H1 (cell line): ENCODE measurements at regions of chr18 and their contacts with region 1.

Region 1: DNA sequence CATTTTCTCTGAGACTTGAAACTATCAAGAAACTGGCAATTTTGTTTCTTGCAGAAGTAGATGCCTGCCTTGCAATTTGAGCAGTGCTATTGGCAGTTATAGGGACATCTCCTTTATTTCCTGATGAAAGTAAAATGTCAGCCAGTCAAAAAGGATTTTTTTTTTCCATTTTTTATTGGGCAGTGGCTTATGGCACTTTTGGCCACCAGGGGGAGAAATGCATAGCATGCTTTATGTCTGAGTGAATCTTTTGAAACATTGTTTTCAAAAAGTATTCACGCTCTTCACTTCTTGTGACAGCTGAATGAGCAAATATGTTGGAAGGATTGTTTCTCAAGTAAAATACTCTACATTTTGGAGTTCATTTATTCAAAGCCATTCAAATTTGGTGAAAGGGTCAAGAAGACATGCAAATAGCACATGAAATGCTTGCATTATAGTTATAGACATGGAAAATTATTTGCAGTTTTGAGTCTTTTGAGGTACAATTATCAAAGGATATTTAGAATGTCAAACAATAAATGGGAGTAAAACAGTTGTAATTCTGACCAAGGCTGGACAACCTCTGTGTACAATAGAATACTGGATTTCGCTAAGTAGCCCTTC is 491.0 kb downstream of the CDH2 start:
- DNase-seq: no peak
- H3K4me3 ChIP-seq: no peak overlapping the region
- H3K27ac ChIP-seq: no peak overlapping the region
- H3K4me1 ChIP-seq: no peaks in the 10 kb centered on the region
- H3K27me3 ChIP-seq: no peaks in the 10 kb centered on the region
- CTCF ChIP-seq: peak in 2 of 3 experiments; percentile 48 to 63; a peak in 3 of 4 replicates
- EP300 ChIP-seq: no peak
- POLR2A ChIP-seq: no peak
- RAD21 ChIP-seq: peak; percentile 53 to 62

Region 2: GRCh38 chr18:27567434-27567833 is 118.5 kb before region 1 on chr18:
- CTCF ChIA-PET with region 1: no interaction called
- POLR2A ChIA-PET with region 1: no interaction called
- DNase-seq: no peak
- H3K4me3 ChIP-seq: no peak overlapping the region
- H3K27ac ChIP-seq: no peak overlapping the region
- H3K4me1 ChIP-seq: peaks cover 0 to 3% (median 3%) of the 10 kb centered on the region in 4 experiments; a peak in 4 of 7 replicates
- H3K27me3 ChIP-seq: no peaks in the 10 kb centered on the region; a peak in 1 of 7 replicates
- CTCF ChIP-seq: no peak
- EP300 ChIP-seq: no peak
- POLR2A ChIP-seq: no peak
- RAD21 ChIP-seq: no peak

Region 3: GRCh38 chr18:27645929-27646328 is 40.0 kb before region 1 on chr18:
- CTCF ChIA-PET with region 1: no interaction called
- POLR2A ChIA-PET with region 1: no interaction called
- DNase-seq: no peak
- H3K4me3 ChIP-seq: no peak overlapping the region
- H3K27ac ChIP-seq: no peak overlapping the region
- H3K4me1 ChIP-seq: peaks cover 0 to 4% (median 2%) of the 10 kb centered on the region in 4 experiments; a peak in 3 of 7 replicates
- H3K27me3 ChIP-seq: no peaks in the 10 kb centered on the region
- CTCF ChIP-seq: no peak
- EP300 ChIP-seq: no peak
- POLR2A ChIP-seq: no peak
- RAD21 ChIP-seq: no peak

Region 4: GRCh38 chr18:27674411-27674810 is 11.5 kb before region 1 on chr18:
- CTCF ChIA-PET with region 1: interaction called, 21 read pairs
- POLR2A ChIA-PET with region 1: no interaction called
- DNase-seq: no peak
- H3K4me3 ChIP-seq: no peak overlapping the region
- H3K27ac ChIP-seq: no peak overlapping the region
- H3K4me1 ChIP-seq: no peaks in the 10 kb centered on the region
- H3K27me3 ChIP-seq: no peaks in the 10 kb centered on the region
- CTCF ChIP-seq: no peak
- EP300 ChIP-seq: no peak
- POLR2A ChIP-seq: no peak
- RAD21 ChIP-seq: no peak